PC-9 (cell line): ENCODE measurements at regions of chr12 and their contacts with region 1.

Region 1: DNA sequence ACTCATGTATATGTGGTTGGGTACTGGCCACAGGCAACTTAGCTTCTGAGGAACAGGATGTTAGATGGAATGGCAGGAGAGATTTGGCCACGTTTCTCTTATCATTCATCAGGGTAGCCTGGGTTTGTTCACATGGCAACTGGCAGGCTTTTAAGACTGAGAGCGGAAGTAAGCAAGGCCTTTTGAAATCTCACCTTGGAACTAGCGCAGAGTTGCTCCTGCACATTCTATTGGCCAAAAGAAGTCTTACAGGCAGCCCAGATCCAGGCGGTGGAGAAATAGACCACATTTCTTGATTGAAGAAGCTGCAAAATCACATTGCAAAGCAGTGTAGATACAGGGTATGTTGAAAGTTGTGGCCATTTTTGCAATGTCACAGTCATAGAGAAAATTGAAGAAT is 3.7 kb downstream of the CLEC4A start:
- DNase-seq: no peak
- H3K4me3 ChIP-seq: no peak overlapping the region
- H3K27ac ChIP-seq: no peak overlapping the region
- H3K4me1 ChIP-seq: no peaks in the 10 kb centered on the region
- H3K27me3 ChIP-seq: no peaks in the 10 kb centered on the region
- CTCF ChIP-seq: no peak

Region 2: DNA sequence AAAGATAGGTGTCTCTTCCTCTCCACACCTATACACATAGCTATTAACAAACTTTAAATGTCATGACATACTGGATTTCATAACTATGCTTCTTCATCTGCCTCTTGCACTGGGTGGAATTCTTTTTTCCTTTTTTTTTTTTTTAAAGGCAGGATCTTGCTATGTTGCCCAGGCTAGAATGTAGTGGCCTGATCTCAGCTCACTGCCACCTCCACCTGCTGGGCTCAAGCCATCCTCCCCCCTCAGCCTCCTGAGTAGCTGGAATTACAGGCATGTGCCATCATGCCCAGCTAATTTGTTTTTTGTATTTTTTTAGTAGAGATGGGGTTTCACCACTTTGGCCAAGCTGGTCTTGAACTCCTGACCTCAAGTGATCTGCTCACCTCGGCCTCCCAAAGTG is 1638.9 kb before region 1 on chr12:
- CTCF ChIA-PET with region 1: no interaction called
- POLR2A ChIA-PET with region 1: interaction called, 19 read pairs
- intact Hi-C with region 1: no loop called
- DNase-seq: no peak
- H3K4me3 ChIP-seq: no peak overlapping the region
- H3K27ac ChIP-seq: no peak overlapping the region
- H3K4me1 ChIP-seq: peaks cover 9% of the 10 kb centered on the region; the same call in 1 of the 2 replicates
- H3K27me3 ChIP-seq: no peaks in the 10 kb centered on the region
- CTCF ChIP-seq: no peak

Region 3: GRCh38 chr12:7716381-7716780 is 410.8 kb before region 1 on chr12:
- CTCF ChIA-PET with region 1: no interaction called
- POLR2A ChIA-PET with region 1: no interaction called
- intact Hi-C with region 1: no loop called
- DNase-seq: peak; percentile 2 to 52
- H3K4me3 ChIP-seq: no peak overlapping the region
- H3K27ac ChIP-seq: no peak overlapping the region
- H3K4me1 ChIP-seq: no peaks in the 10 kb centered on the region
- H3K27me3 ChIP-seq: no peaks in the 10 kb centered on the region
- CTCF ChIP-seq: no peak; the same call in 1 of the 2 replicates

Region 4: GRCh38 chr12:8026291-8026900 is 100.7 kb before region 1 on chr12:
- CTCF ChIA-PET with region 1: no interaction called
- POLR2A ChIA-PET with region 1: no interaction called
- intact Hi-C with region 1: no loop called
- DNase-seq: peak; percentile 98
- H3K4me3 ChIP-seq: peak overlapping the region; percentile 70
- H3K27ac ChIP-seq: peak overlapping the region; percentile 89
- H3K4me1 ChIP-seq: peaks cover 13% of the 10 kb centered on the region
- H3K27me3 ChIP-seq: no peaks in the 10 kb centered on the region
- CTCF ChIP-seq: no peak